Heart right ventricle (tissue), 16 donors: ENCODE measurements at regions of chr2 and their contacts with region 1.

Region 1: DNA sequence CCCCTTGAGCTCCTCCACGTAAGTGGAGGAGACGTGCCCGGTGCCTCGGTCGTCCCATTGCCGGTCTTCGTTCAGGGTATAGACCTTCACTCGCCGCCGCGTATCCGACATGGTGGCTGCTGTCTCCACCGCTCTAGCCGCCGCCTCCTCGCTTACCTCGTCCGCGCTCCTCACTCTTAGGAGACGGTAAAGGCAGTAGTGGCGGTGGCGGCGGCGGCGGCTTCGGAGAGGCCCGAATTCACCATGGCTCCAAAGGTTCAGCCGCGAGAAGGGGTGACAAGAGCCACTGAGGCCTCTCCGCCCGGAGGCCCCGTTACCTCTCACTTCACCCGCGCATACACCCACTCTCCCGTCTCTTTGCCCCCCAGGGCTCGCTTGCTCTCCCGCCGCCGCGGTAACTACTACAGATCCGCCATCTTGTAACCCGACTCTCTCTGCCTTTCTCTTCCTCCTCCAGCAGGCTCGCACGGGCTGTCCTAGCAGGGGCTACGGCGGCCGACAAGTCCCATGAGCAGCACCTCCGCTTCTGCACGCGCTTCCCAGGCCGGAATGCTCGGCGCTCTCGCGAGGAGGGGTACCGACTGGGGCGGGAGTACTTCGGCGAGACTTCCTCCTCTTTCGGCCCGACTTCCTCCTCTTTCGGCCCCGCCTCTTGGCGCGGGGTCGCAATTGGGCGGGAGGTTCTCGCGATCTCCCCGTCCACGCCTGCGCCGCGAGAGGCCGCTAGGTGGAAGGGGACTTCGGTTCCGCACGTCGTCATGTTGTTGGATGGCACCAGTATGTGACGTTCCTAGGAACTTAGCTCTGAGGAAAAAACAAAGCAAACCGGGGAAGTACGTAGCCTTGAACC is at the start of gene PPP4R3B:
- DNase-seq: peak; percentile 99 to 100
- ATAC-seq: peak; percentile 94 to 98 (median 97)
- H3K4me3 ChIP-seq: peak within 1 kb of the TSS; percentile 80 to 99 (median 90)
- H3K27ac ChIP-seq: peak within 1 kb of the TSS; percentile 89 to 100 (median 96)
- H3K4me1 ChIP-seq: peaks cover 13 to 61% (median 42%) of the 10 kb centered on the region in 9 donors
- H3K27me3 ChIP-seq: no peaks in the 10 kb centered on the region
- CTCF ChIP-seq: peak; percentile 10 to 66 (median 55)
- total RNA-seq, gene PPP4R3B: 21.3 to 29.0 (median 25.2) TPM

Region 2: DNA sequence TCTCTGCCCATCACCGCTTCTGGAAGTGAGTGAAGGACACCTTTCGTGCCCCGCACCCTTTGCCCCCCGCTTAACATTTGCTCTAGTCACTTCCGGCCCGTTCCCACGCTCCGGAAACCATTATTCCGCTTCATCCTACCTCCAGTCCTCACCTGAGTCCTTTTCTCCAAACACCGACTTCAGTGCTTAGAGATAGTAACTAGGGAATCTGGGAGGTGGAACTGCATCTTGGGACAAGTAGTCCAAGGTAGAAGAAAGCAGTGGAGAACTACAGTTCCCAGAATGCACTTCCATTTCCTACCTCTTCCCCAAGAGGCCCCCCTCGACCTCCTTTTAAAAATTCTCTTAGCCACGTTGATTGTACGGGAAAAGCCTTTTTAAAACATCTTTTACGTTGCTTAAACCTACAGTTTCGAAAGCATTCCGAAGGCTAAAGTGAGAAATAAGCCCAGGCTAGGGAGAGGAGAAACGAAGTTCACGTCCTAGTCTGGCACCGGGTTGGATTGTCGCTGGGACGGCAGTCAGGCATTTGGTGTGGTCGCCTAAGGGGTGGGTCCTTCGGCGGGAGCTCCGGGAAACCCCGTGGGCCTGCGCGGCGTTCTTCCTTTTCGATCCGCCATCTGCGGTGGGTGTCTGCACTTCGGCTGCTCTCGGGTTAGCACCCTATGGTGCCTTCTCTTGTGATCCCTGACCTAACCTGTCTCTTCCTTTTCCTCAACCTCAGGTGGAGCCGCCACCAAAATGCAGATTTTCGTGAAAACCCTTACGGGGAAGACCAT is 385.1 kb before region 1 on chr2 and contains the starts of genes CLHC1 and RPS27A:
- intact Hi-C with region 1: loop called in 1 of 10 experiments (anchors 10 kb)
- DNase-seq: peak; percentile 93 to 94
- ATAC-seq: peak; percentile 93 to 98 (median 96)
- H3K4me3 ChIP-seq: peak within 1 kb of the TSS; percentile 62 to 98 (median 88)
- H3K27ac ChIP-seq: peak within 1 kb of the TSS; percentile 80 to 98 (median 94)
- H3K4me1 ChIP-seq: peaks cover 0 to 49% (median 43%) of the 10 kb centered on the region in 9 donors
- H3K27me3 ChIP-seq: no peaks in the 10 kb centered on the region
- CTCF ChIP-seq: peak in 1 of 9 donors; percentile 2
- total RNA-seq, gene CLHC1: 4.0 to 9.0 (median 6.3) TPM
- total RNA-seq, gene RPS27A: 365 to 520 (median 408) TPM

Region 3: DNA sequence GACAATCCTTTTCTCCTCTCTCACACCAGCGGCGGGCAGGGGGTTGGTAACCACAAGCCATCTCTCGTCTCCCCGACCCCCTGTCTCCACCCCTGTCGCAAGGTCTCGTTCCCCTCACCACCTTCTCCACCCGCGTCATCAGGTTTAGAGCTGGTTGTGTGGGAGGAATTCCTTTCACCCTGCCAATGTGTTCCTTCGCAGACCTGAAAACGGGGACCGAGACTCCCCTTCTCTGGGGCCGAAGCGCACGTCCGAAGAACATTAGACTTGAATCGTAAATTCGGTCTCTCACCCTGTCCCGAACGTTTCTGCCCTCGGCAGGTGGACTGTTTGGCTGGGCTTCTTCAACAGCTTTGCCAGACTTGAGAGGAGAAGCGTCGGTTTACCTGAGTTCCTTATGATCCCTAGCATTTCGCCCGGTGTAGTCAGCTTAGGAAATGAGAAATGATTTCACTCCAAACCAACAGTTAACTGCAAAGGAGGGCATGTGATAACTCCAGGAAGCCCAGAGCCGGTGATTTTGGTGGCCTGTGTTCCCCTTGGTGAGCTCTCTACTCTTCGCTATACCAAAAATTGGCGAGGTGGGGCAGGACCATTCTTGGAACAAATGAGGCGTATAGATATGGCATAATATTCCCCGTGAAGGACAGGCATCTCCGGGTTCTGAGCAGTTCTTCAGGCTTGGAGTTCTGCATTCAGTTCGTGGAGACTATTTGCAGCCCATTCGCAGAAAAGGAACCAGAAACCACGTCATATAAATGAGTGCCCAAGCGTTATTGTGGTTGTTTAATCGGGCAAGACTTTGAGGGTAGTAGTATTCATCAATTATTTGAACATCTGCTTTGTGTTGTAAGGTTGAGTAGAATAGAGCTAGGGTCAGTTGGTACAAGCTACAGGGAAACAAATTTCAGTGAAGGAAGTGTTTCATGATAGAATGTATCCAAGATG is 97.2 kb before region 1 on chr2:
- intact Hi-C with region 1: loop called in 4 of 10 experiments (anchors 1 to 10 kb)
- DNase-seq: peak in 1 of 2 donors; percentile 37
- ATAC-seq: peak in 7 of 8 donors; percentile 2 to 45 (median 31)
- H3K4me3 ChIP-seq: peak overlapping the region; percentile 42 to 95 (median 82)
- H3K27ac ChIP-seq: peak overlapping the region; percentile 17 to 94 (median 84)
- H3K4me1 ChIP-seq: peaks cover 0 to 22% (median 10%) of the 10 kb centered on the region in 9 donors
- H3K27me3 ChIP-seq: no peaks in the 10 kb centered on the region
- CTCF ChIP-seq: no peak